CD8-positive, alpha-beta T cell (primary cell): ENCODE measurements at regions of chr1 and their contacts with region 1.

Region 1: GRCh38 chr1:16366722-16367257 is at the start of gene SZRD1:
- DNase-seq: peak; percentile 89 to 100 (median 95)
- ATAC-seq: peak; percentile 86
- H3K4me3 ChIP-seq: peak within 1 kb of the TSS; percentile 99
- H3K4me3 Mint-ChIP-seq: peak within 1 kb of the TSS; percentile 99
- H3K27ac ChIP-seq: peak within 1 kb of the TSS; percentile 96 to 100
- H3K27ac Mint-ChIP-seq: peak within 1 kb of the TSS; percentile 99
- H3K4me1 ChIP-seq: peaks cover 31% of the 10 kb centered on the region
- H3K4me1 Mint-ChIP-seq: peaks cover 37% of the 10 kb centered on the region
- H3K27me3 ChIP-seq: no peaks in the 10 kb centered on the region
- H3K27me3 Mint-ChIP-seq: no peaks in the 10 kb centered on the region
- CTCF ChIP-seq: no peak
- total RNA-seq, gene SZRD1: 133 to 136 TPM

Region 2: GRCh38 chr1:15617175-15617880 is 749.5 kb before region 1 on chr1 and contains the start of gene DDI2:
- CTCF ChIA-PET with region 1: no interaction called
- POLR2A ChIA-PET with region 1: no interaction called
- intact Hi-C with region 1: loop called in 1 of 2 experiments (anchors 2 kb)
- DNase-seq: peak; percentile 83 to 96 (median 92)
- ATAC-seq: peak; percentile 88
- H3K4me3 ChIP-seq: peak within 1 kb of the TSS; percentile 83 to 89
- H3K4me3 Mint-ChIP-seq: peak within 1 kb of the TSS; percentile 94
- H3K27ac ChIP-seq: peak within 1 kb of the TSS; percentile 73 to 91
- H3K27ac Mint-ChIP-seq: peak within 1 kb of the TSS; percentile 94
- H3K4me1 ChIP-seq: peaks cover 44% of the 10 kb centered on the region
- H3K4me1 Mint-ChIP-seq: peaks cover 46% of the 10 kb centered on the region
- H3K27me3 ChIP-seq: no peaks in the 10 kb centered on the region
- H3K27me3 Mint-ChIP-seq: no peaks in the 10 kb centered on the region
- CTCF ChIP-seq: no peak
- total RNA-seq, gene DDI2: 34.7 to 37.7 TPM

Region 3: GRCh38 chr1:15975805-15976680 is 390.7 kb before region 1 on chr1 and contains the start of gene ZBTB17:
- CTCF ChIA-PET with region 1: no interaction called
- POLR2A ChIA-PET with region 1: no interaction called
- intact Hi-C with region 1: loop called (anchors 1 kb)
- DNase-seq: peak; percentile 90 to 98 (median 95)
- ATAC-seq: peak; percentile 88
- H3K4me3 ChIP-seq: peak within 1 kb of the TSS; percentile 89 to 93
- H3K4me3 Mint-ChIP-seq: peak within 1 kb of the TSS; percentile 90
- H3K27ac ChIP-seq: peak within 1 kb of the TSS; percentile 68 to 87
- H3K27ac Mint-ChIP-seq: peak within 1 kb of the TSS; percentile 94
- H3K4me1 ChIP-seq: peaks cover 11% of the 10 kb centered on the region
- H3K4me1 Mint-ChIP-seq: peaks cover 38% of the 10 kb centered on the region
- H3K27me3 ChIP-seq: no peaks in the 10 kb centered on the region
- H3K27me3 Mint-ChIP-seq: no peaks in the 10 kb centered on the region
- CTCF ChIP-seq: no peak
- total RNA-seq, gene ZBTB17: 106 to 115 TPM

Region 4: GRCh38 chr1:16236511-16237342 is 130.1 kb before region 1 on chr1 and contains the start of gene CPLANE2:
- CTCF ChIA-PET with region 1: interaction called, 11 read pairs
- POLR2A ChIA-PET with region 1: no interaction called
- intact Hi-C with region 1: loop called (anchors 1 to 2 kb)
- DNase-seq: peak; percentile 88 to 98 (median 96)
- ATAC-seq: peak; percentile 77
- H3K4me3 ChIP-seq: peak within 1 kb of the TSS; percentile 88 to 92
- H3K4me3 Mint-ChIP-seq: peak within 1 kb of the TSS; percentile 88
- H3K27ac ChIP-seq: peak within 1 kb of the TSS; percentile 85 to 91
- H3K27ac Mint-ChIP-seq: peak within 1 kb of the TSS; percentile 92
- H3K4me1 ChIP-seq: peaks cover 17% of the 10 kb centered on the region
- H3K4me1 Mint-ChIP-seq: peaks cover 20% of the 10 kb centered on the region
- H3K27me3 ChIP-seq: no peaks in the 10 kb centered on the region
- H3K27me3 Mint-ChIP-seq: no peaks in the 10 kb centered on the region
- CTCF ChIP-seq: no peak
- total RNA-seq, gene CPLANE2: 5.2 to 5.6 TPM

Region 5: GRCh38 chr1:16498573-16499413 is 132.0 kb after region 1 on chr1:
- CTCF ChIA-PET with region 1: interaction called, 3 read pairs
- POLR2A ChIA-PET with region 1: no interaction called
- intact Hi-C with region 1: loop called (anchors 2 to 10 kb)
- DNase-seq: peak; percentile 62 to 91 (median 85)
- ATAC-seq: peak; percentile 90
- H3K4me3 ChIP-seq: peak overlapping the region; percentile 58 to 92
- H3K4me3 Mint-ChIP-seq: peak overlapping the region; percentile 92
- H3K27ac ChIP-seq: peak overlapping the region; percentile 37 to 66
- H3K27ac Mint-ChIP-seq: no peak overlapping the region
- H3K4me1 ChIP-seq: peaks cover 10% of the 10 kb centered on the region
- H3K4me1 Mint-ChIP-seq: peaks cover 20% of the 10 kb centered on the region
- H3K27me3 ChIP-seq: no peaks in the 10 kb centered on the region
- H3K27me3 Mint-ChIP-seq: no peaks in the 10 kb centered on the region
- CTCF ChIP-seq: no peak